ENCODE measurements at regions of chr1 and their contacts with region 1.

Region 1: GRCh38 chr1:109773146-109773899 is 9.6 kb upstream of the EPS8L3 start:
- DNase-seq: peak; percentile 90
- H3K4me3 Mint-ChIP-seq: no peak overlapping the region
- H3K27ac Mint-ChIP-seq: no peak overlapping the region
- H3K4me1 Mint-ChIP-seq: peaks cover 9% of the 10 kb centered on the region
- H3K27me3 Mint-ChIP-seq: no peaks in the 10 kb centered on the region
- CTCF ChIP-seq: peak; percentile 85

Region 2: DNA sequence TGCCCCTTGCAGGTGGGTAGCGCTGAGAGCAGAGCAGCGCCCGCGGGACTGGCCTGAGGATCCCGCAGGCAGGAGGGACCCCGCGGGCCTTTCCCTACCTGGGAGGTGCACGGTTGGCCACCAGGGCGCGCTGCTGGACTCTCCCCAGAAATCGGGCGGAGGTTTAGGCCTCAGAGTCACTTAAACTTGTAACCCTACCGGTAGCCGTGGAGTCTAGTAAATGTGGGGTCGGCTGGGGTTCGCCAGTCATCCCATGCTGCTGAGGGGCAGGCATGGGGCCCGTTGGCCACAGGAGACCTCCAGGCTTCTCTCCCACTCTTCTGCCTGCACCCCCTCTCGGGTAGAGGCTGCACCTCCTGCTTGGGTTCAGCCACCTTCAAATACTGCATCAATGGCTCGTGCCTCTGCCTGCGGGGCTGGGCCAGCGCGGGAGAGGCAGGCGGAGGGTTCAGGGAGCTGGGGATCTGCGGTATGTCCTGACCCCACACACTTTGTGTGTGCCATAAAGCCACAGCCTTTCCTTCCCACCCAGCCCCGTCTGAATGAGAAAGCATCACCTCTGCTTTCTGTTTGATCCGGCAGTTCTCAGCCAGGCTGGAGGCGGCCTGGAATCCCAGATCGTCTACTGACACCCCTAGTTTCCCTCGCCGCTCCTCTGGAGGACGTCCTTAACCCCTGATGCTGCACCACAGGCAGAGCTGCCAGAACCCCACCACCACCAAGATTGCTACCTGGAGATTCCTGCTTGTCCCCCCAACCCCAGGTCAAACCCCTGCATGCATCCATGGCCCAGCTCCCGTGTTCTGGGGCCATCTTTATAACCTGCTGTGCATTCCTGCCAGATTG is 129.7 kb before region 1 on chr1:
- CTCF ChIA-PET with region 1: interaction called, 459 read pairs
- POLR2A ChIA-PET with region 1: interaction called, 3 read pairs
- intact Hi-C with region 1: loop called (anchors 1 kb)
- DNase-seq: peak; percentile 80
- H3K4me3 Mint-ChIP-seq: no peak overlapping the region
- H3K27ac Mint-ChIP-seq: no peak overlapping the region
- H3K4me1 Mint-ChIP-seq: no peaks in the 10 kb centered on the region
- H3K27me3 Mint-ChIP-seq: no peaks in the 10 kb centered on the region
- CTCF ChIP-seq: peak; percentile 85

Region 3: DNA sequence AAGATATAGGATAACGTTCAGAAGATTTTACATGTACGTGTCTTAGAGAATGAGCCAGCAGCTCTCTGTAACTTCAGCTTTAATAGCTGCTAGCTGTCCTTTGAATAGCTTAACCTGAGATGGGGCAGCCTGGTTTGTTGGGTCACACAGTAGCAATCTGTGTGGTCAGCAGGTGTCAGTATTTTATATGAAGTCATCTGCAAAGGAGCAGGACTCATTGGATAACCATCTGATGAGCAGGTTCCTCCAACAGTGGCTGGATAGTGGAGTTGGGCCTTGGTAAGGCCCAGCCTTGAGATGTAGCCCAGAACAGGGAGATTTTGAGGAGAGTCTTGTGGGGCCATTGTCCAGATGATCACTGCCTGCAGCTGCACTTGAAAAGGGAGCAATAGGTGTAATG is 54.8 kb before region 1 on chr1:
- CTCF ChIA-PET with region 1: interaction called, 18 read pairs
- POLR2A ChIA-PET with region 1: no interaction called
- intact Hi-C with region 1: loop called (anchors 5 kb)
- DNase-seq: peak; percentile 13
- H3K4me3 Mint-ChIP-seq: no peak overlapping the region
- H3K27ac Mint-ChIP-seq: peak overlapping the region; percentile 27
- H3K4me1 Mint-ChIP-seq: peaks cover 19% of the 10 kb centered on the region
- H3K27me3 Mint-ChIP-seq: no peaks in the 10 kb centered on the region
- CTCF ChIP-seq: no peak

Region 4: DNA sequence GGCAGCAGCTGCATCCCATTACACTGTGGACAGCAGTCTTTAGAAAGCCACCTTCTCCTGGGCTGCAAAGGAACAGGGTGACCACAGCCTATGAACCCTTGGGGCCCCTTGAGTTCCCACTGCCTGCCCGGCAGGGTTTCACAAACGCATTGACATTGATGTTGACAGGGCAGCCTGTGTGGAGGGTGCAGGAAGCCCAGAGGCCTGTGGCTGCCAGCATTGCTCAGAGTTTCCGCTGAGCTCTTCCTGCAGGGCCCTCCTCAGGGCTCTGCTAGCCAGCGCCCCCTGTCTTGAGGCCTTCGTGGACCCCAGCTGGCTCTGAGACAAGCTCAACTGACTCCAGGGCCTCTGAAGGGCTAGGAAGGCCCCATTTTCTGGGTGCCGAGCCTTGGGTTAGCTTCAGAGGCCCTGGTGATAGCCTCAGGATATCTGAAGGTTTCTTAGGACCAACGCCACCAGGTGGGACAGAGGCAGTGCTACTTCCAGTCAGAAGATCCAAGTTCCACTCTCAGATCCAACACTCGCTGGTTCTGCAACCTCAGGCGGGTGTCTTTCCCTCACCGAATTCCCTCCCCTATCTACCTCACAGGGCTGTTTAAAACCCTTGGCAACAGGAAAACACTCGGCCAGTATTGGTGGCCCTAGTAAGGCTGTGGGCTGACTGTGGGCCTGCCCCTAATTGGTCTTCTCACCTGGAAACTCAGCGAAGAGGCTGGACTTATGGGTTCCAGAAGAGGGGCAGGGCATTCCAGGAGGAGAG is 17.6 kb after region 1 on chr1:
- CTCF ChIA-PET with region 1: interaction called, 11 read pairs
- POLR2A ChIA-PET with region 1: no interaction called
- intact Hi-C with region 1: no loop called
- DNase-seq: no peak
- H3K4me3 Mint-ChIP-seq: no peak overlapping the region
- H3K27ac Mint-ChIP-seq: no peak overlapping the region
- H3K4me1 Mint-ChIP-seq: peaks cover 22% of the 10 kb centered on the region
- H3K27me3 Mint-ChIP-seq: no peaks in the 10 kb centered on the region
- CTCF ChIP-seq: no peak

Region 5: DNA sequence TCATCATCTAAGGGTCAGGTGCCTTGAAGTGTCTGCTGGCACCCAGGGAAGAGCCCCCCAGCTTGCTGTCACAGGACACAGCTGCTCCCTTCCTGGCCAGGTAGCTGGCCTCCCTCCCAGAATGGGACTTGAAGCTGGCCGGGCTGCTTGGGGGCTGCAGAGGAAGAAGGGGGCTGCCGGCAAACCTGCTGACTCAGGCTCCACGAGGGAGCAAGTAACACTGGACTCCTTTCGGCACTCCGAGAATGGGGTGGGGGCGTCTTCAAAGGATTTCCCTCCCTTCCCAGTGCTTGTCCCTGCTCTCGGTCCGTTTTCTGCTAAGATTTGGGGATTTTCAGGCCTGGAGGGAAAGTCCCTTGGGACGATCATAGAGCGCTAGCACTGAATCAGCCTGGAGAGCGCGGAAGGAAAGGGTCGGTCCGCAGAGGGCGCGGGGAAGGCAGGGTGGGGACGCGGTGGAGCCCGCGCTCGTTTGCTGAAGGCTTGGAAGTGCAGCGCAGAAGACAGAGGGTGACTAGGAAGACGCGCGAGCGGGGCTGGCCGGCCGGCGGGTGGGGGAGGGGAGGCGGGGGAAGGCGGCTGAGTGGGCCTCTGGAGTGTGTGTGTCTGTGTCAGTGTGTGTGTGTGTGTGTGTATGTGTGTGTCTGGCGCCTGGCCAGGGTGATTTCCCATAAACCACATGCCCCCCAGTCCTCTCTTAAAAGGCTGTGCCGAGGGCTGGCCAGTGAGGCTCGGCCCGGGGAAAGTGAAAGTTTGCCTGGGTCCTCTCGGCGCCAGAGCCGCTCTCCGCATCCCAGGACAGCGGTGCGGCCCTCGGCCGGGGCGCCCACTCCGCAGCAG is 137.0 kb after region 1 on chr1 and contains the start of gene CSF1:
- CTCF ChIA-PET with region 1: interaction called, 5 read pairs
- POLR2A ChIA-PET with region 1: interaction called, 5 read pairs
- intact Hi-C with region 1: loop called (anchors 5 kb)
- DNase-seq: peak; percentile 72
- H3K4me3 Mint-ChIP-seq: peak within 1 kb of the TSS; percentile 73
- H3K27ac Mint-ChIP-seq: peak within 1 kb of the TSS; percentile 74
- H3K4me1 Mint-ChIP-seq: peaks cover 25% of the 10 kb centered on the region
- H3K27me3 Mint-ChIP-seq: no peaks in the 10 kb centered on the region
- CTCF ChIP-seq: no peak
- total RNA-seq, gene CSF1: 6.3 and 11.7 TPM in 2 replicates

Measured in MCF 10A (cell line).